ENCODE measurements at regions of chr5 and their contacts with region 1.

Region 1: DNA sequence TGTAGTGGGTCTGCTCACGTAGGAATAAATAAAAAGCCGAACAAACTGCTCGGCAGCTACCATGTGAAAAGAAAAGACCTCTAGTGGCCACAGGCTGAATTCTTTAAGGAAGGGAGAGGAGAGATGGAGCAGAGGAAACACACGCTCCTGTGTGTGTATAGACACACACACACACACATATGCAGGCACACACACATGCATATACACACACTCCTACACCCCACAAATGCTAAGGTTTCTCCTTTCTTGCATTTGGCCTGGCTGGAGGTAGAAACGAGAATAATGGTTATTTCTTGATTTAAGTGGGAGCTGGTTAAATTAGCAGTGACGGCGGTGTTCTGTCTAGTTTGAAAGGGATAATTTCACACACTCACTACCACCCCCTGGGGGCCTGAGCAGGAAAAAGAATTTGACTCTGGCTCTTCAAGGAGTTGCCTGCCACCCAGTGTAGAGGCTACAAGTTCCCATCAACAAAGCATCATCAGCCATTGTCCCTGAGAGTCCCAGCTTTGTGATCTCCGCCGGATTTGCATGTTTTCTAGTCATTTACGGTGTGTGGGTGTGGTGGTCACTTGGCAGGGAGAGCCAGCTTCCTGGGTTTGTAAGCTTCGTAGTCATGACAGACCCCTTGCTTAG is at the start of gene INSYN2B:
- DNase-seq: peak; percentile 63
- H3K4me3 ChIP-seq: peak within 1 kb of the TSS; percentile 58 to 85
- H3K27ac ChIP-seq: peak within 1 kb of the TSS; percentile 32 to 92; a peak in 3 of 4 replicates
- H3K4me1 ChIP-seq: peaks cover 2 to 24% of the 10 kb centered on the region in 2 experiments; a peak in 3 of 4 replicates
- H3K27me3 ChIP-seq: no peaks in the 10 kb centered on the region
- CTCF ChIP-seq: peak; percentile 90
- EP300 ChIP-seq: no peak
- RAD21 ChIP-seq: peak; percentile 67
- polyA plus RNA-seq, gene INSYN2B: 9.2 and 13.4 TPM in 2 replicates

Region 2: GRCh38 chr5:169716278-169716677 is 264.3 kb before region 1 on chr5:
- CTCF ChIA-PET with region 1: interaction called, 34 read pairs
- POLR2A ChIA-PET with region 1: no interaction called
- DNase-seq: no peak
- H3K4me3 ChIP-seq: no peak overlapping the region
- H3K27ac ChIP-seq: 0 out of 4 replicates have a peak overlapping the region, but pooled peaks of 1 of the 2 experiments have one; percentile 22
- H3K4me1 ChIP-seq: peaks cover 0 to 20% of the 10 kb centered on the region in 2 experiments; a peak in 3 of 4 replicates
- H3K27me3 ChIP-seq: no peaks in the 10 kb centered on the region
- CTCF ChIP-seq: no peak
- EP300 ChIP-seq: no peak; a peak in 1 of 4 replicates
- RAD21 ChIP-seq: no peak

Region 3: GRCh38 chr5:169778622-169779596 is 201.6 kb before region 1 on chr5:
- CTCF ChIA-PET with region 1: interaction called, 12 read pairs
- POLR2A ChIA-PET with region 1: no interaction called
- DNase-seq: no peak
- H3K4me3 ChIP-seq: no peak overlapping the region
- H3K27ac ChIP-seq: no peak overlapping the region
- H3K4me1 ChIP-seq: no peaks in the 10 kb centered on the region; a peak in 1 of 4 replicates
- H3K27me3 ChIP-seq: no peaks in the 10 kb centered on the region
- CTCF ChIP-seq: no peak
- EP300 ChIP-seq: no peak
- RAD21 ChIP-seq: no peak

Region 4: DNA sequence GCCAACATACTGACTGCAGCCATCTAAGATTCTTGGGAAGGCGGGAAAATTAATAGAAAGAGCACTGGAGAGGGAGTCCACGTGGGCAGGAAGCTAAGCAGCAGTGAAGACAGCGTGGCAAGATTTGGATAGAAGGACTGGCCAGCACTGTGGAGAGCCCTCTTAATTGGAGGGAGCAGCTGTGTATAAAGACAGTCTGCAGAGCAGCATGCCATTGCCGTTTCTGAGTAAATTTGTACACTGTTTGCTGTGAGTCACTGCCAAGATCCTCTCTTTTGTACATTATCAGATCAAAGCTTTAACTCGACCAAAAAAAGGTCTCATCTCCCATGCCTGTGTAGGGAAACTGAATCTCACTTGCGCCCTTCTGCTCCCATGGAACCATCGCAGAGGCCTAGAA is 45.5 kb before region 1 on chr5:
- CTCF ChIA-PET with region 1: interaction called, 13 read pairs
- POLR2A ChIA-PET with region 1: no interaction called
- DNase-seq: no peak
- H3K4me3 ChIP-seq: no peak overlapping the region
- H3K27ac ChIP-seq: peak overlapping the region; percentile 58 to 60; a peak in 3 of 4 replicates
- H3K4me1 ChIP-seq: peaks cover 11 to 27% of the 10 kb centered on the region in 2 experiments; a peak in 3 of 4 replicates
- H3K27me3 ChIP-seq: no peaks in the 10 kb centered on the region
- CTCF ChIP-seq: no peak
- EP300 ChIP-seq: peak; percentile 31 to 44; a peak in 2 of 4 replicates
- RAD21 ChIP-seq: no peak

Region 5: GRCh38 chr5:170008376-170008775 is 27.8 kb after region 1 on chr5:
- CTCF ChIA-PET with region 1: interaction called, 13 read pairs
- POLR2A ChIA-PET with region 1: no interaction called
- DNase-seq: no peak
- H3K4me3 ChIP-seq: no peak overlapping the region
- H3K27ac ChIP-seq: no peak overlapping the region
- H3K4me1 ChIP-seq: peaks cover 0 to 4% of the 10 kb centered on the region in 2 experiments; a peak in 2 of 4 replicates
- H3K27me3 ChIP-seq: no peaks in the 10 kb centered on the region
- CTCF ChIP-seq: no peak
- EP300 ChIP-seq: no peak
- RAD21 ChIP-seq: no peak

Region 6: GRCh38 chr5:170183816-170184687 is 203.5 kb after region 1 on chr5:
- CTCF ChIA-PET with region 1: interaction called, 12 read pairs
- POLR2A ChIA-PET with region 1: no interaction called
- DNase-seq: peak; percentile 74
- H3K4me3 ChIP-seq: no peak overlapping the region
- H3K27ac ChIP-seq: peak overlapping the region in 1 of 2 experiments; percentile 85; a peak in 1 of 4 replicates
- H3K4me1 ChIP-seq: peaks cover 0 to 24% of the 10 kb centered on the region in 2 experiments; a peak in 2 of 4 replicates
- H3K27me3 ChIP-seq: no peaks in the 10 kb centered on the region
- CTCF ChIP-seq: peak; percentile 87
- EP300 ChIP-seq: no peak
- RAD21 ChIP-seq: peak; percentile 90

Region 7: GRCh38 chr5:170491479-170491878 is 510.9 kb after region 1 on chr5:
- CTCF ChIA-PET with region 1: no interaction called
- POLR2A ChIA-PET with region 1: no interaction called
- DNase-seq: no peak
- H3K4me3 ChIP-seq: no peak overlapping the region
- H3K27ac ChIP-seq: peak overlapping the region; percentile 28 to 71; a peak in 3 of 4 replicates
- H3K4me1 ChIP-seq: peaks cover 0 to 11% of the 10 kb centered on the region in 2 experiments; a peak in 2 of 4 replicates
- H3K27me3 ChIP-seq: no peaks in the 10 kb centered on the region
- CTCF ChIP-seq: no peak
- EP300 ChIP-seq: peak in 1 of 2 experiments; percentile 94; a peak in 2 of 4 replicates
- RAD21 ChIP-seq: no peak

Measured in SK-N-SH (cell line).